ENCODE measurements at regions of chr5 and their contacts with region 1.

Region 1: GRCh38 chr5:56763711-56764466 is 51.5 kb upstream of the MAP3K1 start:
- DNase-seq: no peak
- H3K4me3 Mint-ChIP-seq: no peak overlapping the region
- H3K27ac Mint-ChIP-seq: no peak overlapping the region
- H3K4me1 Mint-ChIP-seq: peaks cover 17% of the 10 kb centered on the region
- H3K27me3 Mint-ChIP-seq: peaks cover 4% of the 10 kb centered on the region

Region 2: GRCh38 chr5:55821731-55822512 is 942.0 kb before region 1 on chr5:
- intact Hi-C with region 1: loop called (anchors 10 kb)
- DNase-seq: no peak
- H3K4me3 Mint-ChIP-seq: peak overlapping the region; percentile 59
- H3K27ac Mint-ChIP-seq: no peak overlapping the region
- H3K4me1 Mint-ChIP-seq: peaks cover 12% of the 10 kb centered on the region
- H3K27me3 Mint-ChIP-seq: peaks cover 58% of the 10 kb centered on the region

Region 3: GRCh38 chr5:56838409-56839039 is 74.6 kb after region 1 on chr5:
- intact Hi-C with region 1: no loop called
- DNase-seq: no peak
- H3K4me3 Mint-ChIP-seq: peak overlapping the region; percentile 49
- H3K27ac Mint-ChIP-seq: peak overlapping the region; percentile 56
- H3K4me1 Mint-ChIP-seq: peaks cover 56% of the 10 kb centered on the region
- H3K27me3 Mint-ChIP-seq: no peaks in the 10 kb centered on the region